A673 (cell line): ENCODE measurements at regions of chr3 and their contacts with region 1.

Region 1: GRCh38 chr3:100844063-100844936 is 135.0 kb downstream of the TFG start:
- DNase-seq: no peak
- H3K4me3 ChIP-seq: no peak overlapping the region
- H3K27ac ChIP-seq: no peak overlapping the region
- H3K4me1 ChIP-seq: no peaks in the 10 kb centered on the region
- H3K27me3 ChIP-seq: no peaks in the 10 kb centered on the region
- CTCF ChIP-seq: no peak

Region 2: GRCh38 chr3:100634493-100635272 is 209.6 kb before region 1 on chr3:
- CTCF ChIA-PET with region 1: no interaction called
- POLR2A ChIA-PET with region 1: interaction called, 17 read pairs
- intact Hi-C with region 1: no loop called
- DNase-seq: peak; percentile 68
- H3K4me3 ChIP-seq: no peak overlapping the region
- H3K27ac ChIP-seq: no peak overlapping the region
- H3K4me1 ChIP-seq: no peaks in the 10 kb centered on the region
- H3K27me3 ChIP-seq: no peaks in the 10 kb centered on the region
- CTCF ChIP-seq: peak; percentile 54